ENCODE measurements at regions of chr5 and their contacts with region 1.

Region 1: DNA sequence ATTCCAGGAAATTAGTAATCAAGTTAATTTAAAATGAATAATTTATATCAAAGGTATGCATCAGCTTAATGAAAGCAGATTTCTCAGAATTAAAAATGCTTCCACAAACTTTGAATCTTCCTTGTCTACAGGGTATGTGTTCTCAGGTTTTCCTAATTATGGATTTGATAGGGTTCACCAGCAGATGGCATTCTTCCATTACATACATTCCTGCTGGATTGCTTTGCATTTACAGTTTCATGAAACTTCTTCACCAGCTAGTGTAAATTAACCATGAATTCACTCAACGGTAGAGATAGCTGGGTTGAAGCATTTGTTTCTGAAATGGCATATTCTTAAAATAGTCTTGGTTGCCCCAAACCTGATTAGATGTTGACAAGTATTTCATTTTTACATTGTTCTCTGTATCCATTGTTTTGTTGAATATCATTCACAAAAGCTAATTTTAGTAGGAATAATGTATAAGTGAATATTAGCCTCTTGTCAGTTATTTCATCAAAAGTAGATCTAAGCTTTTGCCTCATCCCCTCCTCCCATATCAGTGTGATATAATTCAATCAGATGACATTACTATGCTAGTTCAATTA is 68.7 kb upstream of the WDR41 start:
- DNase-seq: peak; percentile 48
- ATAC-seq: peak; percentile 65
- H3K4me3 ChIP-seq: no peak overlapping the region
- H3K27ac ChIP-seq: no peak overlapping the region
- H3K4me1 ChIP-seq: no peaks in the 10 kb centered on the region
- H3K27me3 ChIP-seq: no peaks in the 10 kb centered on the region
- CTCF ChIP-seq: peak; percentile 29 to 62 (median 45); a peak in 5 of 6 replicates
- EP300 ChIP-seq: no peak
- POLR2A ChIP-seq: no peak
- RAD21 ChIP-seq: peak; percentile 87

Region 2: DNA sequence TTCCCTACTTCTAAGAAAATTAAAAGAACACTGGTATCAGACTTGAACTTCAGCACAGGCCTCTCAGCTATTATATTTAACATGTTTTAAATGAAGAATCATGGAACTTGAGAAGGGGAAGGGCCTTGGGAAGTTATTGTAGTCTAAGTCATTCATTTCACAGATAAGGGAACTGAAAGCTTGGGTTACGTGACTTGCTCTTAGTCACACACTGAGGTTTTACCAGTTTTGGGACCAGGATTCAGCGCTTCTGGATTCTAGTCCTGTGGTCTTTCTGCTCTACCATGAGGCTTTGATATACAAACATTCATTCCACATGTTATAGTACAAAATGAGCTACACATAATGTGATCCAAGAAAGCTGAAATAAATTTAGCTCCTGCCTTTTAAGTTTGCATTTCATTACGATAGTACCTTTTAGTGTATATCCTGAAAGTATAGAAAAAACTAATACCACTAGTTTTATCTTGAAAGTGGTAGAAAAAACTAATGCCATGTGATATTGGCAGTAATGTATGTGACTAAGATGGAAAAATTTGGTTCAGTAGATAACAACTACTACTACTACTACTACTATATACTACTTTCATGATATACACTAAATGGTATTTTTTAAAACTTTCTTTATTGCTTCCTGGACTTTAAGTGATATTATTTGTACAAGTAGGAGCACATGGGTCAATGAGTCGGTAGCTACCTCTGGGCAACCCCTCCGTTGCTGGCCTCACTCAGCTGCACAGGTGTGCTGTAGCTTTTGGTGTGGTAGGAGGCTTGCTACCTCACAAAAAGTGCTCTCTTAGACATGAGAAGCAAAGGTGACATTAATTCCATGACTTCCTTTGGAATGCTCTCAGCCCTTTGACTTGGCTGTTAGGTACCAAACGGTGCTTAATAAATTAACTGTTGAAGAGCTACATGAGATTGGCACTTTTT is 978.3 kb before region 1 on chr5:
- CTCF ChIA-PET with region 1: no interaction called
- POLR2A ChIA-PET with region 1: no interaction called
- RAD21 ChIA-PET with region 1: no interaction called
- SMC1A ChIA-PET with region 1: no interaction called
- in situ Hi-C with region 1: no loop called
- intact Hi-C with region 1: no loop called
- DNase-seq: peak; percentile 79
- ATAC-seq: peak; percentile 98
- H3K4me3 ChIP-seq: no peak overlapping the region
- H3K27ac ChIP-seq: peak overlapping the region; percentile 66
- H3K4me1 ChIP-seq: peaks cover 14% of the 10 kb centered on the region; the same call in 1 of the 2 replicates
- H3K27me3 ChIP-seq: no peaks in the 10 kb centered on the region
- CTCF ChIP-seq: no peak
- EP300 ChIP-seq: peak; percentile 81 to 98; a peak in 3 of 4 replicates
- POLR2A ChIP-seq: no peak
- RAD21 ChIP-seq: no peak

Region 3: GRCh38 chr5:77590347-77590746 is 29.6 kb after region 1 on chr5:
- CTCF ChIA-PET with region 1: interaction called, 8 read pairs
- POLR2A ChIA-PET with region 1: interaction called, 3 read pairs
- RAD21 ChIA-PET with region 1: interaction called, 20 read pairs
- SMC1A ChIA-PET with region 1: interaction called, 21 read pairs
- in situ Hi-C with region 1: no loop called
- intact Hi-C with region 1: no loop called
- DNase-seq: peak; percentile 98
- ATAC-seq: peak; percentile 99
- H3K4me3 ChIP-seq: no peak overlapping the region
- H3K27ac ChIP-seq: no peak overlapping the region
- H3K4me1 ChIP-seq: no peaks in the 10 kb centered on the region
- H3K27me3 ChIP-seq: no peaks in the 10 kb centered on the region
- CTCF ChIP-seq: no peak
- EP300 ChIP-seq: peak in 1 of 2 experiments; percentile 77; a peak in 3 of 4 replicates
- POLR2A ChIP-seq: no peak
- RAD21 ChIP-seq: no peak

Region 4: GRCh38 chr5:77775790-77776553 is 215.2 kb after region 1 on chr5 and contains the start of gene TBCA:
- CTCF ChIA-PET with region 1: interaction called, 4 read pairs
- POLR2A ChIA-PET with region 1: no interaction called
- RAD21 ChIA-PET with region 1: interaction called, 3 read pairs
- SMC1A ChIA-PET with region 1: interaction called, 5 read pairs
- in situ Hi-C with region 1: no loop called
- intact Hi-C with region 1: loop called (anchors 5 kb)
- DNase-seq: peak; percentile 78
- ATAC-seq: peak; percentile 88
- H3K4me3 ChIP-seq: peak within 1 kb of the TSS; percentile 89
- H3K27ac ChIP-seq: peak within 1 kb of the TSS; percentile 95
- H3K4me1 ChIP-seq: peaks cover 4% of the 10 kb centered on the region; the same call in 1 of the 2 replicates
- H3K27me3 ChIP-seq: no peaks in the 10 kb centered on the region
- CTCF ChIP-seq: peak in 2 of 3 experiments; percentile 31 to 39; a peak in 3 of 6 replicates
- EP300 ChIP-seq: no peak; a peak in 1 of 4 replicates
- POLR2A ChIP-seq: peak; percentile 86
- RAD21 ChIP-seq: peak; percentile 27; the same call in 1 of the 2 replicates
- polyA plus RNA-seq, gene TBCA: 567 to 647 TPM

Region 5: GRCh38 chr5:77984587-77984986 is 423.8 kb after region 1 on chr5:
- CTCF ChIA-PET with region 1: interaction called, 10 read pairs
- POLR2A ChIA-PET with region 1: no interaction called
- RAD21 ChIA-PET with region 1: interaction called, 7 read pairs
- SMC1A ChIA-PET with region 1: interaction called, 14 read pairs
- in situ Hi-C with region 1: no loop called
- intact Hi-C with region 1: no loop called
- DNase-seq: no peak
- ATAC-seq: no peak
- H3K4me3 ChIP-seq: no peak overlapping the region
- H3K27ac ChIP-seq: no peak overlapping the region
- H3K4me1 ChIP-seq: no peaks in the 10 kb centered on the region
- H3K27me3 ChIP-seq: no peaks in the 10 kb centered on the region
- CTCF ChIP-seq: no peak
- EP300 ChIP-seq: no peak
- POLR2A ChIP-seq: no peak
- RAD21 ChIP-seq: no peak

Region 6: DNA sequence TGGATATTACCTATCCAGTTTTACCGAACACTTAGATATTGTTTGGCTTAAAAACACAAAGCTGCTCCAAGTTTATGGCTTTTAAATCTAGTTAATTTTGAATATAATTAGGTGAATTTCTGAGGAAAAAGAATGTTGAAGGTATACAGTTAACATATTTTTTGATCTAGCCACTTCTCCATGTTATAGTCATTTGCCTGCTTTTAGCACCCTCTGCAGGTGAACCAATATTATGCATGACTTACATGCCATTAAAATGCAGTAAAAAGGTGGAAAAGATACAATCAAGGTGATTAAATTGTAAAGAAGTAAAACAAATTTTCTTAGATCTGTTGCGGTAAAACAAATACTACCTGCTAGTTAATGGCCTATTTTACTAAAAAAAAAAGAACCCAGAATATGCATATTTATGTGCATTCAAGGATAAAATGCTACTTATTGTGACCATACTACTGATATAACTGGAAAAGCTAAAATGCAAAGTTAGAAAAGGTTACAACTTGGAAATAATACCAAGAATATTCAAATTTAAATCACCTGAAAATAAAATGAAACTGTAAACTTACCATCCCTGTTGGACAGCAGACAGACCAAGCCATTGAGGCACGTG is 601.6 kb after region 1 on chr5:
- CTCF ChIA-PET with region 1: interaction called, 12 read pairs
- POLR2A ChIA-PET with region 1: no interaction called
- RAD21 ChIA-PET with region 1: interaction called, 15 read pairs
- SMC1A ChIA-PET with region 1: interaction called, 6 read pairs
- in situ Hi-C with region 1: no loop called
- intact Hi-C with region 1: loop called (anchors 2 kb)
- DNase-seq: no peak
- ATAC-seq: peak; percentile 61
- H3K4me3 ChIP-seq: no peak overlapping the region
- H3K27ac ChIP-seq: no peak overlapping the region
- H3K4me1 ChIP-seq: no peaks in the 10 kb centered on the region
- H3K27me3 ChIP-seq: no peaks in the 10 kb centered on the region
- CTCF ChIP-seq: peak; percentile 47 to 66 (median 47); a peak in 5 of 6 replicates
- EP300 ChIP-seq: no peak
- POLR2A ChIP-seq: no peak
- RAD21 ChIP-seq: peak; percentile 82